ENCODE measurements at regions of chr11 and their contacts with region 1.

Region 1: DNA sequence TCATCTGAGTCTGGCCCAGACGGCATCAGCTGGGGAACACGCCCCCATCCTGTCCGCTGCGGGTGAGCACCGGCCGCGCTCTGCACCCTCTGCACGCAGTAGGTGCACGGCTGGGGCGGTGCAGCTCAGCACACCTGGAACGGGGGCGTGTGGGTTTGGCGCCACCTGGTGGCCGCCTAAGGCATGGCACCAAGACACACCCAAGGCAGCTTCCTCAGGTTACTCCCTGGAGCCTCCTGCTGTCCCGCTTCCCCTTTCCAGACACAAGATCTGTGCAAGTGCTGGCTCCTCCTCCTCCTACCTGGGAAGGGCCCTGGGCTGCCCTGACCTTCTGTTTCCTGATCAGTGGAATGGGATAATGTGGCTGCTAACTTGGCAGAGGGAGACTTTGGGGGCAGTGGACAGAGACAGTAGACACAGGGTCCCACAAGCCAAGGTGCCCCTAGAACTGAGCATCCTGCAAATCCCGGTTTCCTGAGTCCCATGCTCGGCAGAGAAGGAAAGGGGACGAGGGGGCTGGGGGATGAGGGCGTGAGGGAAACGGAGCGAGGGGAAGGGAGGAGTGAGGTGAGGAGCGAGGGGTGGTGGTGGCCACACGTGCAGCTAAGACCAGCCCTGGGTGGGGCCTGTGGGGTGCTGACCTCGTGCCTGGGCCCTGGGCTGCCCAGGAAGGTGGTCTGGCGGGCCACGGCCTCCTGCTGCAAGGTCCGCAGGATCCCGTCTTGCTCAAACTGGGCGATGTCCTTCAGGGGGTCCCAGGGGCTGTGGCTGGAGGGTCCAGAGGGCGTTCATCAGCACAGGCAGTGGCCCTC is 34.8 kb upstream of the CARS1 start:
- DNase-seq: peak; percentile 86
- H3K4me3 ChIP-seq: no peak overlapping the region
- H3K27ac ChIP-seq: no peak overlapping the region
- H3K4me1 ChIP-seq: peaks cover 6% of the 10 kb centered on the region
- H3K27me3 ChIP-seq: no peaks in the 10 kb centered on the region
- CTCF ChIP-seq: peak; percentile 99

Region 2: DNA sequence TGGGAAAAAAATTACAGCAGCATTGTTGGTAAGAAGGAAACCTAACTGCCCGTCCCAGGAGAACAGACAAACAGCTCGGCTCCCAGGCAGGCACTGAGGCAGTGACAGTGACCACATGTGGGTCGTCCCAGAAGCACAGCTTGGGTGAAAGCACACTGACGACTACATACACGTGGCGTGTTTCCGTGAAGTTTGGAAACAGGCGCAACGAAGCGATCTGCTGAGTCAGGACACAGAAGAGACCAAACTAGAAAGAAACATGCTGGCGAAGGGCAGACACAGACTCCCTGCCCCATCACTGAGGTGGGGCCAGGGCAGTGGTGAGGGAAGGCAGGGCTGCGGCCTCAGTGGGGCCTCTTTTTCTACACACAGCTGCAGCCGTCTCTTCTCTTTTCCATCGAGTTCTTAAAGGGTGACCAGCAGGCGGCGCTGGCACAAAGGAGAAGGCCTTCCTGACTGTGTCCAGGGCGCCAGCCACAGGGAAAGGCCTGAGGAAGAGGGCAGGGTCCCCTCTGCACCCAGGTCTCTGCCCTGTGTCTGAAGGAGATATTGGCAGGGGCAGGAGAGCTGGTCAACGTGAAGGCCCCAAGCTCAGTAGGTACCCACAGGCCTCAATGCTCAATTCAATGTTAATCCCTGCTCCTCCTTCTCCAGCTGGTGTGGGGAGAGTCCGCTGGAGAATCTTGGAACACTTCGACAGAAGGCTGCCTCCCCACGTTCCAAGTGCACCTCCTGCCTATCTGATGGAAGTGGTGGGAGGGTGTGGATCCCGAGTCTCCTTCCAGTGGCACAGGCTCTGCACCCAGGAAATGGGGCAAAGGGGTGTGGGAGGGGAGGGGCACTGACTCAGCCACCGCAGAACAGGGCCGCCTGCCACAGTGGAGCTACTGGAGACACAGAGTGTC is 54.7 kb before region 1 on chr11:
- intact Hi-C with region 1: loop called (anchors 2 kb)
- DNase-seq: peak; percentile 85
- H3K4me3 ChIP-seq: no peak overlapping the region
- H3K27ac ChIP-seq: no peak overlapping the region
- H3K4me1 ChIP-seq: no peaks in the 10 kb centered on the region
- H3K27me3 ChIP-seq: no peaks in the 10 kb centered on the region
- CTCF ChIP-seq: peak; percentile 58

Measured in colonic mucosa (tissue), 4 donors.